ENCODE measurements at regions of chr16 and their contacts with region 1.

Region 1: GRCh38 chr16:10806698-10807097 is 11.9 kb downstream of the TVP23A start:
- DNase-seq: no peak
- ATAC-seq: no peak

Region 2: GRCh38 chr16:10752843-10753523 is 53.7 kb before region 1 on chr16:
- intact Hi-C with region 1: loop called in 1 of 2 experiments (anchors 10 kb)
- DNase-seq: peak; percentile 49 to 69
- ATAC-seq: peak; percentile 26

Measured in left colon (tissue), 2 donors.